Activated CD4-positive, alpha-beta T cell treated with anti-CD3 and anti-CD28 coated beads for 36 hours (primary cell): ENCODE measurements at regions of chrX and their contacts with region 1.

Region 1: GRCh38 chrX:39883666-39884065 is 214.1 kb downstream of the BCOR start:
- DNase-seq: peak; percentile 72
- ATAC-seq: peak; percentile 96
- H3K4me3 Mint-ChIP-seq: no peak overlapping the region
- H3K27ac Mint-ChIP-seq: peak overlapping the region; percentile 78
- H3K4me1 Mint-ChIP-seq: peaks cover 19% of the 10 kb centered on the region
- H3K27me3 Mint-ChIP-seq: peaks cover 2% of the 10 kb centered on the region

Region 2: DNA sequence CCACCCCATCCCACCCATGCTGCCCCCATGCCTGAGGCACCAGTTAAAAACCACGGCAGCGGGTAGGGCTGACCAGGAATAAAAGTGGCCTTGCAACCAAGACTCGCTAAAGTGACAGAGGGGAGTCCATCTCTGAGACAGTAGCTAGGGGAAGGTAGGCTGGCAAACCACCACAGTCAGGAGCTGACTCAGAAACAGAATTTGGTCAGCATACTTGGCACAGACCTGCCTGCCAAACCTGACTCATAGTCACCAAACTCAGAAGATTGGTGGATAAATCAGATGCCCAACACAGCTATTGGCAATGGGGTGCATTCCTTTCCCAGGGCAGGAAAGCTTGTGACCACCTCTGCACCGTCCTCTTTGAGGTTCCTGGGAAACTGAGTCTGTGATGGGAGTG is 20.3 kb after region 1 on chrX:
- CTCF ChIA-PET with region 1: interaction called, 3 read pairs
- POLR2A ChIA-PET with region 1: no interaction called
- intact Hi-C with region 1: loop called in 1 of 2 experiments (anchors 1 kb)
- DNase-seq: peak; percentile 53
- ATAC-seq: peak; percentile 87
- H3K4me3 Mint-ChIP-seq: no peak overlapping the region
- H3K27ac Mint-ChIP-seq: no peak overlapping the region
- H3K4me1 Mint-ChIP-seq: peaks cover 32% of the 10 kb centered on the region
- H3K27me3 Mint-ChIP-seq: peaks cover 4% of the 10 kb centered on the region